PC-9 (cell line): ENCODE measurements at regions of chr11 and their contacts with region 1.

Region 1: DNA sequence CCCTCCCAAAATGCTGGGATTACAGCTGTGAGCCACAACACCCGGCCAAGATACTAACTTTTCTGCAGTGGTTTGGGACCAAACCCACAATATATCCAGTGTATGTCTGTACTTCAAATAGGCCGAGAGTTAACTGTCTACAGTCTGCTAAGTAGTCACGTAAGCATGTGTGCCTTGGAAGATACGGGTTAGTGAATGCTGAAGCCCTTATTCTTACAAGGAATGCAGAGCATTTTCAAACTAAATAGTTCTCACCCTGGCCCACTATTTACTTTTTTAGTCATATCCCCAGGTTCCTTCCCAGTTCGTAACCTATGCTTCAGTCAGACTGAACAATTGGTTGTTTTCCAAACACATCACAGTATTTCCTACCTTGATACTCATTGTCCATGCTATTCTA is 176.0 kb downstream of the WNT11 start:
- DNase-seq: peak in 1 of 2 experiments; percentile 89
- H3K4me3 ChIP-seq: no peak overlapping the region
- H3K27ac ChIP-seq: peak overlapping the region; percentile 80
- H3K4me1 ChIP-seq: peaks cover 43% of the 10 kb centered on the region
- H3K27me3 ChIP-seq: no peaks in the 10 kb centered on the region
- CTCF ChIP-seq: no peak

Region 2: GRCh38 chr11:75325700-75326438 is 704.4 kb before region 1 on chr11:
- CTCF ChIA-PET with region 1: no interaction called
- POLR2A ChIA-PET with region 1: no interaction called
- intact Hi-C with region 1: no loop called
- DNase-seq: peak in 1 of 2 experiments; percentile 58
- H3K4me3 ChIP-seq: no peak overlapping the region
- H3K27ac ChIP-seq: no peak overlapping the region
- H3K4me1 ChIP-seq: peaks cover 25% of the 10 kb centered on the region
- H3K27me3 ChIP-seq: no peaks in the 10 kb centered on the region
- CTCF ChIP-seq: no peak

Region 3: DNA sequence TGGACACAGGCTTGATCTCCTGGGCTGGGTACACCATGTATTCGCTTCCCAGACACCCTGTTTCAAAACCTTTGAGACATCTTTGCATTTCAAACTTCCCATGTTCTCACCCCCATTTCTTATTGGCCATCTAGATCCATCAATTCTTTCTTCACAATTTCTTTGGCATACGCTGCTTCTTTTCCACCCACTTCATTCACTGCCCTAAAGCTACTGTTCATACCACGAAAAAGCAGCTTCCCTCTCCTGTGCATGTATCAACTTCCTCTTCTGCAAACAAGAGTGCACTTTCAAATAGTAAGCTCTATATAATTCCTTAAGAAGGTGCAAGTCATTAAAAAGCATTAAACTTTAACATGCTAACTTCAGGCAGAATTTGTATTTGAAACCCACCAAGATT is 193.9 kb before region 1 on chr11:
- CTCF ChIA-PET with region 1: no interaction called
- POLR2A ChIA-PET with region 1: no interaction called
- intact Hi-C with region 1: no loop called
- DNase-seq: no peak
- H3K4me3 ChIP-seq: no peak overlapping the region
- H3K27ac ChIP-seq: no peak overlapping the region
- H3K4me1 ChIP-seq: peaks cover 16% of the 10 kb centered on the region
- H3K27me3 ChIP-seq: no peaks in the 10 kb centered on the region
- CTCF ChIP-seq: no peak

Region 4: DNA sequence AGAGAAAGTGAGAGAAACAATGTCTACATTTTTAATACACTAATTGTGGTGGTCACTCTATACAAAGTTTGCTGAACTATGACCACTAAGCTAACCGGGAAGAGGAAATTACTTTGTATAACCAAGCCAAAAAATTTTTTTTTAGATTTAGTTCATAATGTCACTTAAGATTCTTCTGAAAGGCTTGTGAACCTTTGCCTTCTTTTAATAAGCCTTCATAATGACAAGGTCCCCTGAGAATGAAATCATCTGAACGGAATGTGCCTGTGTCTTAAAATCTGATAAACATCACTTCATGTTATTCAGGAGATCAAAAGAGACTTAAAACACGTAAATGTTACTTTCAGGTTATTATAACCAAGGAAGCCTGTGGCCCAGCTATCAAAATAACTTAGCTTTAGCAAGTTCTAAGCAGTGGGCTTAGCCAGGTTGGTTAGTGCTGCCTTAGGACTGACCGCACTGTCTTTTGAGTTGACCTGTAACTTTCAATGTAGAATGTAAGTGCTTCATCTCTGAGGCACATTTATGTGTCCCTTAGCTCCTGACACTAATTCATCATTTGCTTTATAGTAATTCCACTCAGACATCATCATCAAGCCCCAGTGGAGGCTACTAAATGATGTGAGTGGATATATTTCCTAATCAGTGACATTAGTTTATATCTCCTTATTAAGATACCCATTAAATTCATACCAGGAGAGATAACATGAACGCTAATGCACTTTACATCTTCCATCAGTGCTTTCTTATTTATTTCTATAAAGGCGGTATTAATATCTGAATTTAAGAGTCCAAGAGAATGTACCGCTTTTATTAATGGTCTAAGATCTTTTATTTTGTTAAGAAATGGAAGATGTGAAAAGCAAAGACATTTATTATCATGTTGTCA is 53.5 kb after region 1 on chr11:
- CTCF ChIA-PET with region 1: no interaction called
- POLR2A ChIA-PET with region 1: no interaction called
- intact Hi-C with region 1: loop called (anchors 2 kb)
- DNase-seq: peak; percentile 13 to 95
- H3K4me3 ChIP-seq: peak overlapping the region; percentile 0; the same call in 1 of the 2 replicates
- H3K27ac ChIP-seq: peak overlapping the region; percentile 68
- H3K4me1 ChIP-seq: peaks cover 23% of the 10 kb centered on the region
- H3K27me3 ChIP-seq: no peaks in the 10 kb centered on the region
- CTCF ChIP-seq: no peak

Region 5: DNA sequence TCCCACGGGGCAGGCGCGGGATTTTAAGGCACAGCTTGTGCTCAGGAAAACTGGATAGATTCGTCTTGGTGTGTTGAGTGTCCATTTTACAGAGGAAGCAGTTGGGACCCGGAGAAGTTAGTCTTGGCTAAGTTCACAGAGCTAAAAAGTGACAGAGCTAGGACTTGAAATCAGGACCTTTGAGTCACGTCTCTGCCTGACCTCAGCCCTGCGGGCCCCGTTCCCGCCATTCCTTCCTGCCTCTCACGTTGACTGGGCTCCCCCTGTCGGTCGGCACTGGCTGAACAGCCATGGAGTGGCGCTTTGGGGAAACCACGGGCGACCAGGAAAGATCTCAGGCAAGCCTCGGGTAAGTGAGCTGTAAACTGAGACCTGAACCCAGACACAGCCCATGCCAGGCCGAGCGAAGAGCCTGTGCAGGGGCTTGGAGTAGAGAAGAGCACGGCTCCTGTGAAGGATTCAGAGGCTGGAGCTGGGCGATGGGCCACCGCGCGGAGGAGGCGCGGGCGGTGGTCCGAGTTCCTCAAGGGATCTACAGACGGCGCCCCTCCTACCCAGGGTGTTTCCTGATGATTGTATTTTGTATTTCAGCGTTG is 121.9 kb after region 1 on chr11:
- CTCF ChIA-PET with region 1: no interaction called
- POLR2A ChIA-PET with region 1: no interaction called
- intact Hi-C with region 1: loop called (anchors 5 kb)
- DNase-seq: peak in 1 of 2 experiments; percentile 76
- H3K4me3 ChIP-seq: no peak overlapping the region
- H3K27ac ChIP-seq: peak overlapping the region; percentile 88
- H3K4me1 ChIP-seq: peaks cover 37% of the 10 kb centered on the region
- H3K27me3 ChIP-seq: no peaks in the 10 kb centered on the region
- CTCF ChIP-seq: peak; percentile 72